Activated naive CD4-positive, alpha-beta T cell treated with anti-CD3 and anti-CD28 coated beads for 36 hours (primary cell): ENCODE measurements at regions of chr4 and their contacts with region 1.

Region 1: DNA sequence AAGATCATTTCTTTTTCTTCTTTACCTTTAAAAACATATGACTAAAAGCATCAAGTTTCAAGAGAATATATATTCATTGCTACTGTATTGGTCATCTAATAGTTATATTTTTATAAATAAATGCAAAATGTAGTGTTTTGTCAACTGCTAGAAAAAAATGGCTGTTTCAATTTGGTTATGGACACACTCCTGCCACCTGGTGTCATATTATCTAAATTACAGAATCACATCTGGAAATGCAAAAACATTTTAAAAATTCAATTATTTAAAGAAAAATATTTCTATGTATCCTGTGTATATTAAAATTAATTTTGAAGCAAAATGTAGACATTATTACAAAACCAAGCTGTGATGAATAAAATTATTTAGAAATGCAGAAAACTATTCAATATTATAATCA is 329.4 kb upstream of the PCDH18 start:
- DNase-seq: no peak
- H3K4me3 Mint-ChIP-seq: no peak overlapping the region
- H3K27ac Mint-ChIP-seq: no peak overlapping the region
- H3K4me1 Mint-ChIP-seq: no peaks in the 10 kb centered on the region
- H3K27me3 Mint-ChIP-seq: no peaks in the 10 kb centered on the region

Region 2: DNA sequence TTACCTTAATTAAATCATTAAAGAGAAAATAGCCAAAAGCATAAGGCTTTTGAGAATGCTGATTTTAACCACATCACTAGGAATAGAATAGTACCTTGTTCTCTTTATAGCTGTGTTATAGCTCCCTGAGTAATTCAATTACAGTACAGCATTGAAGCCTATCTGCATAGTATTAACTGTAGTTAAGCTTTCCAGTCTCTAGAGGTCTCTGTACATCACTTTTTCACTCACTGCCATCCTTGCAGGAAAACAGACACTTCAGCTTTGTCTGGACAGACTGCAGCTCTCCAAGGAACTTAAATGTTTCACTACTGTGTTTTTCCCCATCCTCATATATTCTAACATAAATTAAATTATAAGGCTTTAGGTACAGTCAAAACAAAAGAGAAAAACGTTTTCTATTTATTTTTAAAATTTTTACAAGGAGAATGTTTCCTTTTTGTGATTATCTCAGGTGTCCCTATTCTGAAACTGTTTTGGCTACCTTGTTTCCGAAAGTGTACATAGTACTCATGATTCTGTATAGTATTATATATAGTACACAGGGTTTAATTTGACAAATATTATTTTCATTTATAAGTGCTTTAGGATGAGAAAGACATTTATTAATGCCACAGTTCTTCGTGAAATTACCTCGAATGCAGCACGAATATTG is 737.3 kb before region 1 on chr4:
- CTCF ChIA-PET with region 1: no interaction called
- intact Hi-C with region 1: loop called (anchors 1 kb)
- DNase-seq: no peak
- H3K4me3 Mint-ChIP-seq: no peak overlapping the region
- H3K27ac Mint-ChIP-seq: no peak overlapping the region
- H3K4me1 Mint-ChIP-seq: no peaks in the 10 kb centered on the region
- H3K27me3 Mint-ChIP-seq: no peaks in the 10 kb centered on the region

Region 3: DNA sequence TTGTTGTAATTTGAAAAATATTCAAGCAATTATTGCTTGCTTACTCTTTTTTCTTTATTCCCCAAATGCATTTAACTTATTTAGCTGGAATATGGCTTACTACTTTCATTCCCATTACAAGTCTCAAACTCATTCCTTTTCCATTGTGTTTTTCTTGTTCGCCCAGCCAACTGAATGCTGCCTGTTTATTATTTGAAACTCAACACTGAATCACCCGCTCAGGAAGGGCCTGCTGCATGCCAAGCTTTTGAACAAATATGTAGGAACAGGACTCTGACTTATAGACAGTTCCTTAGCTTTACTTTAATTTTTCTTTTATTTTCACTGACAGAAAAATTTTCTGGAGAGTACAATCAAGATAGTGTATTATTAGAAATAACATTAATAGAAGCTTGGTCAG is 342.3 kb before region 1 on chr4:
- CTCF ChIA-PET with region 1: no interaction called
- intact Hi-C with region 1: no loop called
- DNase-seq: no peak
- H3K4me3 Mint-ChIP-seq: no peak overlapping the region
- H3K27ac Mint-ChIP-seq: no peak overlapping the region
- H3K4me1 Mint-ChIP-seq: no peaks in the 10 kb centered on the region
- H3K27me3 Mint-ChIP-seq: no peaks in the 10 kb centered on the region

Region 4: DNA sequence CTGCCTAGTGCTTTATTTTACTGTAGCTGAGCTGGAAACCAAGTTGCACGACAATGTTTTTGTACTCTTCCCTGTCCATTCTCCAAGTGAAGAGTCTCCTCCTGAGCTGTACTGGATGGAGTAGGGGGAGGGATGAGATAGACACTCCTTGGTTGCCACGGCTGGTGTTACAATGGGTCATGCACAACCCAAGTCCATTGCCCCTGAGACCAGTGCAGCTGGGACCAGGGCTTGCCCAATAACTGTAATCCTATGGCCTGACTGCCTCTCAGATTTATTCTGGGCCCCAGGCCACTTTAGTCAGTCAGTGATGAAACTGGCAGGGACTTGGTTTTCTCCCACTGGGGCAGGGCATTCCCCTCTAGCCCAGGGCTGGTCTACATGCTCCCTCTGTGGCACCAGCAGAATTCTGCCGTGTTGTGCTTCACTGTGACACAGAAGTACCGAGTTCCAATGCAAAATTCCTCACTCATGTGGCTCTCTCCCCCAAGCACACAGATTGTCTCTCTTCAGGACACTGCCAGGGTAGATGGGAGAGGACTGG is 126.0 kb before region 1 on chr4:
- CTCF ChIA-PET with region 1: no interaction called
- intact Hi-C with region 1: no loop called
- DNase-seq: no peak
- H3K4me3 Mint-ChIP-seq: no peak overlapping the region
- H3K27ac Mint-ChIP-seq: no peak overlapping the region
- H3K4me1 Mint-ChIP-seq: no peaks in the 10 kb centered on the region
- H3K27me3 Mint-ChIP-seq: no peaks in the 10 kb centered on the region

Region 5: GRCh38 chr4:138277133-138277532 is 415.5 kb after region 1 on chr4:
- CTCF ChIA-PET with region 1: no interaction called
- intact Hi-C with region 1: no loop called
- DNase-seq: no peak
- H3K4me3 Mint-ChIP-seq: no peak overlapping the region
- H3K27ac Mint-ChIP-seq: no peak overlapping the region
- H3K4me1 Mint-ChIP-seq: no peaks in the 10 kb centered on the region
- H3K27me3 Mint-ChIP-seq: no peaks in the 10 kb centered on the region